ENCODE measurements at regions of chr10 and their contacts with region 1.

Region 1: GRCh38 chr10:74826142-74827044 is at the start of gene KAT6B:
- DNase-seq: peak; percentile 100
- ATAC-seq: peak; percentile 73
- H3K4me3 ChIP-seq: peak within 1 kb of the TSS; percentile 74
- H3K27ac ChIP-seq: peak within 1 kb of the TSS; percentile 79
- H3K4me1 ChIP-seq: peaks cover 53% of the 10 kb centered on the region
- H3K27me3 ChIP-seq: no peaks in the 10 kb centered on the region
- CTCF ChIP-seq: peak; percentile 61
- total RNA-seq, gene KAT6B: 83.0 and 94.5 TPM in 2 replicates

Region 2: GRCh38 chr10:74189999-74190421 is 636.4 kb before region 1 on chr10:
- CTCF ChIA-PET with region 1: interaction called, 13 read pairs
- POLR2A ChIA-PET with region 1: no interaction called
- intact Hi-C with region 1: no loop called
- DNase-seq: peak; percentile 100
- ATAC-seq: peak; percentile 90
- H3K4me3 ChIP-seq: peak overlapping the region; percentile 58
- H3K27ac ChIP-seq: peak overlapping the region; percentile 75
- H3K4me1 ChIP-seq: peaks cover 81% of the 10 kb centered on the region
- H3K27me3 ChIP-seq: no peaks in the 10 kb centered on the region
- CTCF ChIP-seq: no peak

Region 3: GRCh38 chr10:74432841-74433594 is 393.4 kb before region 1 on chr10:
- CTCF ChIA-PET with region 1: no interaction called
- POLR2A ChIA-PET with region 1: no interaction called
- intact Hi-C with region 1: loop called (anchors 1 kb)
- DNase-seq: peak; percentile 70
- ATAC-seq: peak; percentile 82
- H3K4me3 ChIP-seq: no peak overlapping the region
- H3K27ac ChIP-seq: peak overlapping the region; percentile 46
- H3K4me1 ChIP-seq: peaks cover 29% of the 10 kb centered on the region
- H3K27me3 ChIP-seq: no peaks in the 10 kb centered on the region
- CTCF ChIP-seq: no peak

Region 4: DNA sequence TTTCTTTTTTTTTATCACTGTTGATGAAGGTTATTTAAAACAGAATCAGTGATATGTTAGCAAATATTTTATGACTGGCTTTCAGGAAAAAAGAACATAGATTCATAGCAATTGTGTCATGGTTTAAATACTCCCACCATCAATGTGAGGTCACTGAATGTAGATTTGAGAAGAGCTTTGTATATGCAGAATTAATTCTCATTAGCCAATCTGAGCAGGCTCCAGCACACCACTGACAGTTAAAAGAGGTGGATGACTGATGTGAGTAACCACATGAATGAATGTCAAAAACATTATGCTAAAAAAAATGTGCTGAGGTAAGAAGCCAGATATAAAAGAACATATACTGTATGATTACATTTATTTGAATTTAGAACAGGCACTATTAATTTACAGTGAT is 174.8 kb before region 1 on chr10:
- CTCF ChIA-PET with region 1: no interaction called
- POLR2A ChIA-PET with region 1: interaction called, 11 read pairs
- intact Hi-C with region 1: no loop called
- DNase-seq: no peak
- ATAC-seq: no peak
- H3K4me3 ChIP-seq: no peak overlapping the region
- H3K27ac ChIP-seq: no peak overlapping the region
- H3K4me1 ChIP-seq: no peaks in the 10 kb centered on the region
- H3K27me3 ChIP-seq: no peaks in the 10 kb centered on the region
- CTCF ChIP-seq: no peak

Region 5: GRCh38 chr10:74799721-74800221 is 26.6 kb before region 1 on chr10:
- CTCF ChIA-PET with region 1: no interaction called
- POLR2A ChIA-PET with region 1: no interaction called
- intact Hi-C with region 1: loop called (anchors 1 kb)
- DNase-seq: peak; percentile 100
- ATAC-seq: peak; percentile 97
- H3K4me3 ChIP-seq: peak overlapping the region; percentile 3; the same call in 1 of the 2 replicates
- H3K27ac ChIP-seq: peak overlapping the region; percentile 67
- H3K4me1 ChIP-seq: peaks cover 8% of the 10 kb centered on the region
- H3K27me3 ChIP-seq: no peaks in the 10 kb centered on the region
- CTCF ChIP-seq: no peak

Region 6: GRCh38 chr10:75000748-75001321 is 174.4 kb after region 1 on chr10:
- CTCF ChIA-PET with region 1: interaction called, 14 read pairs
- POLR2A ChIA-PET with region 1: no interaction called
- intact Hi-C with region 1: no loop called
- DNase-seq: no peak
- ATAC-seq: no peak
- H3K4me3 ChIP-seq: no peak overlapping the region
- H3K27ac ChIP-seq: no peak overlapping the region
- H3K4me1 ChIP-seq: no peaks in the 10 kb centered on the region
- H3K27me3 ChIP-seq: no peaks in the 10 kb centered on the region
- CTCF ChIP-seq: no peak

Region 7: DNA sequence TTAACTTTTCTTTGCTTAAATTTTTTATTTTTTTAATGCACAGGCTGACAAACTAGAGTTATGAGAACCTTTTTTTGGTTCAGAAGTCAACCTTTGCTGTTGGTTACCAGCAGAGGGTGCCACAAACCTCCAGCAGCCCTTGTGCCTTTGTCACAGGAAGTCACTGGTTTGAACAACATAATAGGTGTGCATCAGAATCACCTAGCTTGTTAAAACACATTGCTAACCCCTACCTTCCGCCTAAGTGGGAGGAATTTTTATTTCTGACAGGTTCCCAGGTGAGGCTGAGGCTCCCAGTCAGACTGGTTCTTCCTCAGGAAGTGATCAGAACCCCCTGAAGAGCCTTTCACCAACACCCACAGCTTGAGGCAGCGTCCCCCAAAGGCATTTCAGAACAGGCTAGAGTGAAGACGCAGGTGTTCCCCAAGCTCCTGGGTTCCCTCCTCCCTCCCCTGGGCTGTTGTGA is 361.6 kb after region 1 on chr10:
- CTCF ChIA-PET with region 1: no interaction called
- POLR2A ChIA-PET with region 1: no interaction called
- intact Hi-C with region 1: no loop called
- DNase-seq: peak; percentile 99
- ATAC-seq: peak; percentile 64
- H3K4me3 ChIP-seq: no peak overlapping the region
- H3K27ac ChIP-seq: peak overlapping the region; percentile 6
- H3K4me1 ChIP-seq: peaks cover 31% of the 10 kb centered on the region
- H3K27me3 ChIP-seq: no peaks in the 10 kb centered on the region
- CTCF ChIP-seq: peak; percentile 98

Region 8: DNA sequence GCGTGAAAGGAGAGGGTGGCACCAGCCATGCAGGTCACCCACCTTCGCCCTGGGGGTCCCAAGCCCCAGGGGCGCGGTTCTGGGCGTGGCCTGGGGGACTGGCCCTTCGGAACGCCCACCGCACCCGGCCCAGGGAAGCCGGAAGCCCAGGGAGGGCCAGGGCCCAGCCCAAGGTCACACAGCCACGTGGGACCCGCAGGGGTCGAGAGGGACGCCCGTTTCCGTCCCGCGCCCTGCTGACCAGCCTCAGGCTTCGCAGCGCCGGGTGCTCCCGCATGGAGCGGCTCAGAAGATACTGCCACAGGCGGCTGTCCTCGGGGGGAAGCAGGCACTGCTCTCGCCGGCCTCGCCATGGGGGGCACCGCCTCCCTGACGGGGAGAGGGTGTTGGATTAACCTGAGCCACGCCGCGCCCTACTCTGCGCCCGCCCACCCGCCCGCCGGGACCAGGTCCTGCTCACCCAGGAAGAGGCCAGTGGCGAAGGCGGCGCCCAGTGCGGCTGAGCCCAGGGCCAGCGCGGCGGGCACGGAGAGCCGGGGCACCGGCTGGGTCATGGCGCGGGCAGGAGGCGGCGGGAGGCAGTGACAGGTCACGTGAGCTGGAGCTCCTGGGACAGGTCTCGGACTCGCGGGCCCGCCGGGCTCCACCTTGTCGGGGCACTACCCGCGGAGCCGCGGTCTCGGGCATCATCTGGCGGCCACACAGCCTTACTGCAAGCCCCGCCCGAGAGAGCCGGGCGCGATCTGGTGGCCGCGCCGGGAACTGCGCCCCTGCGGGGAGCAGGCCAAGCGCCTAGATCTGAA is 409.2 kb after region 1 on chr10 and contains the start of gene COMTD1:
- CTCF ChIA-PET with region 1: interaction called, 8 read pairs
- POLR2A ChIA-PET with region 1: no interaction called
- intact Hi-C with region 1: loop called (anchors 5 kb)
- DNase-seq: peak; percentile 100
- ATAC-seq: peak; percentile 59
- H3K4me3 ChIP-seq: peak within 1 kb of the TSS; percentile 72
- H3K27ac ChIP-seq: peak within 1 kb of the TSS; percentile 71
- H3K4me1 ChIP-seq: peaks cover 42% of the 10 kb centered on the region
- H3K27me3 ChIP-seq: no peaks in the 10 kb centered on the region
- CTCF ChIP-seq: peak; percentile 100
- total RNA-seq, gene COMTD1: 183 and 214 TPM in 2 replicates